Activated T-helper 1 cell treated with anti-CD3 and anti-CD28 coated beads, Interleukin-12 subunit alpha, Interleukin-12 subunit beta, Interleukin-2, Interleukin-4 antibody, amounts not matched to agents 30 ng/mL and 10 ng/mL and 1 ng/mL, durations not matched to agents 14 hours and 24 hours and 36 hours (primary cell): ENCODE measurements at regions of chr3 and their contacts with region 1.

Region 1: DNA sequence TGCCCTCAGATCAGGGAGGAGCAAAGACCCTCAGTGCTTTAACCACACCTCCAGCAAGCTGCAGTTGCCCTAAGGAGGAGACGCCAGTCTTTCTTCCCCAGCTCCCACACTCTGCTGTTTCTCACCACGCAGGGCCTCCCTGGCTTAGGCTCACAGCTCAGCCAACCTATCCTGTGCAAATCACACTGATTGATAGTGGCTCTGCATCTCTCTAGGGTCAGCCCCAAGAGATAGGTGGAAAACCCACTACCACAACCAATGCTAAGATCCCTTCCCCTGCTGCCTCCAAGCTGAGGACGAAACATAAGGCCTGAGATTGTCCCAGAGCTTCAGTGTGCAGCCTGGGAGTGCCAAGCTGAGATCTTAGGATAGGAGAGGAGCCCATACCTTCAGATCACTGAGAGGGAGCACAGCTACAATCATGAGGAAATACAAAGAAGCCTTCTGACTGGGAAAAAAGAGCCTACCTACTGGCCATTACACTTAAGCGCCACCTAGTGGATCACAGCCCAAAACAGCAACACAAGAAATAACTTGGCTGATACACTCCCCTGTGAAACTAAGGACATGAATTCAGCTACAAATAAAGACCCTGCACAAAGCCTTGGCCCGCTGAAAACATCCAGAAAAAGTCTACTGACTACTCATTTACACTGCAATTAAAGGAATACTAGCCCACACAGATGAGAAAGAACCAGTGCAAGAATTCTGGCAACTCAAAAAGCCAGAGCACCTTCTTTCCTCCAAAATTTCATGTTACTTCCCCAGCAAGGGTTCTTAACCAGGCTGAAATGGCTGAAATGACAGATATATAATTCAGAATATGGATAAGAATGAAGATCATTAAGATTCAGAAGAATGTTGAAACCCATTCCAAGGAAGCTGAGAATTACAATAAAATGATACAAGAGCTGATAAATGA is 271.5 kb upstream of the DCBLD2 start:
- DNase-seq: no peak
- H3K4me3 Mint-ChIP-seq: no peak overlapping the region
- H3K27ac Mint-ChIP-seq: no peak overlapping the region
- H3K4me1 Mint-ChIP-seq: no peaks in the 10 kb centered on the region
- H3K27me3 Mint-ChIP-seq: peaks cover 3% of the 10 kb centered on the region

Region 2: DNA sequence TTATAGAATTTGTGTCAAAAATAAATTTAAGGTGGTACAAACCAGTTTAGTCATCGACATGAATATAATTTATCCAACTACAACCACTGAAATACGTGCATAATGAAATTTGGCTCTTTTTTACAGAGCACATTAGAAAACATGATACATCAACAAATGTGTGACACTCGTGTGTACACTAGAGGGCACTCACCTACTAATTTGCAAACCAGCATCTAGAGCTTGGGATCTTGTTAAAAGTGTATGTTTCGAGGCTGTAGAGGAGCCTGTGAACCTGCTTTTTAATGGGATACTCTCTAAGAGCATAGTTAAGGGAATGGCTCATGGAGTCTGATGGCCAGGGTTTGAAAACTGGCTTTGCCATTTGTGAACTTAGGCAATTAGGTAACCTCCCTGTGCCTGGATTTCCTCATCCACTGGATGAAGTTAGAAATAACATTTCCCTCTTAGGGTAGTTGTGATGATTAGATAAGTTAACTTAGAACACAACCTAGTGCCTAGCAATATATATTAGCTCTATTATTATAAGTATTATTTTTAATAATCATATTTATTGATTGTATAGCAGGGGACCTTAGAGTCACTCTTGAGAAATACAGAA is 570.8 kb before region 1 on chr3:
- intact Hi-C with region 1: loop called (anchors 2 kb)
- DNase-seq: no peak
- H3K4me3 Mint-ChIP-seq: no peak overlapping the region
- H3K27ac Mint-ChIP-seq: no peak overlapping the region
- H3K4me1 Mint-ChIP-seq: peaks cover 13% of the 10 kb centered on the region
- H3K27me3 Mint-ChIP-seq: peaks cover 11% of the 10 kb centered on the region

Region 3: GRCh38 chr3:99269606-99270351 is 96.8 kb after region 1 on chr3:
- intact Hi-C with region 1: no loop called
- DNase-seq: no peak
- H3K4me3 Mint-ChIP-seq: no peak overlapping the region
- H3K27ac Mint-ChIP-seq: no peak overlapping the region
- H3K4me1 Mint-ChIP-seq: no peaks in the 10 kb centered on the region
- H3K27me3 Mint-ChIP-seq: no peaks in the 10 kb centered on the region

Region 4: GRCh38 chr3:100210772-100211135 is 1037.8 kb after region 1 on chr3:
- intact Hi-C with region 1: no loop called
- DNase-seq: peak; percentile 7
- H3K4me3 Mint-ChIP-seq: peak overlapping the region; percentile 57
- H3K27ac Mint-ChIP-seq: peak overlapping the region; percentile 77
- H3K4me1 Mint-ChIP-seq: peaks cover 27% of the 10 kb centered on the region
- H3K27me3 Mint-ChIP-seq: peaks cover 6% of the 10 kb centered on the region